Activated CD4-positive, alpha-beta memory T cell treated with anti-CD3 and anti-CD28 coated beads, Interleukin-2, amount 10 ng/mL, durations not matched to agents 7 days and 5 days (primary cell): ENCODE measurements at regions of chr11 and their contacts with region 1.

Region 1: DNA sequence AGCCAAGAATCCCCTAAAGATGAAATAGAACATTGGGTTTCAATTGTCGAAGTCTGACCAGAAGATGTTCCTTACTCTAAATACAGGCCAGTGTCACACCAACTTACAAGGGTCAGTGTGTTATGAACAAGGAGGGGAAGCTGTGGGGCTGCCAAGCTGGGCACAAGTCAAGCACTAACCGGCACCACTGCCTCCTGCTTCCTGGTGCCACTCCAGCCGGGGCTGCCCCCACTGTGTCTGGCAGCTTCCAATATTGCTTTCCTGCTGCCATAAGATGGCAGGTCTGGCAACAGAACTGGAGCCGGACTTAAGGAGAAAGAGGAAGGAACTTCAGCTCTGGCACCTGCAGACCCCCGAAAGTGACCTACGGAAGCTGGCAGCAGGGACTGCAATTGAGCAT is 13.7 kb upstream of the VPS37C start:
- DNase-seq: no peak
- H3K4me3 Mint-ChIP-seq: no peak overlapping the region
- H3K27ac Mint-ChIP-seq: no peak overlapping the region
- H3K4me1 Mint-ChIP-seq: peaks cover 7% of the 10 kb centered on the region
- H3K27me3 Mint-ChIP-seq: peaks cover 14% of the 10 kb centered on the region

Region 2: GRCh38 chr11:61161190-61162091 is 13.5 kb before region 1 on chr11 and contains the start of gene VPS37C:
- CTCF ChIA-PET with region 1: no interaction called
- POLR2A ChIA-PET with region 1: no interaction called
- DNase-seq: peak; percentile 93
- H3K4me3 Mint-ChIP-seq: peak within 1 kb of the TSS; percentile 88
- H3K27ac Mint-ChIP-seq: peak within 1 kb of the TSS; percentile 92
- H3K4me1 Mint-ChIP-seq: peaks cover 48% of the 10 kb centered on the region
- H3K27me3 Mint-ChIP-seq: no peaks in the 10 kb centered on the region
- total RNA-seq, gene VPS37C: 6.1 to 7.5 TPM

Region 3: GRCh38 chr11:61187505-61188130 is 12.7 kb after region 1 on chr11:
- CTCF ChIA-PET with region 1: interaction called, 17 read pairs
- POLR2A ChIA-PET with region 1: no interaction called
- DNase-seq: peak; percentile 80
- H3K4me3 Mint-ChIP-seq: no peak overlapping the region
- H3K27ac Mint-ChIP-seq: no peak overlapping the region
- H3K4me1 Mint-ChIP-seq: peaks cover 4% of the 10 kb centered on the region
- H3K27me3 Mint-ChIP-seq: peaks cover 10% of the 10 kb centered on the region

Region 4: GRCh38 chr11:62208785-62209144 is 1033.8 kb after region 1 on chr11:
- CTCF ChIA-PET with region 1: no interaction called
- POLR2A ChIA-PET with region 1: no interaction called
- DNase-seq: no peak
- H3K4me3 Mint-ChIP-seq: no peak overlapping the region
- H3K27ac Mint-ChIP-seq: no peak overlapping the region
- H3K4me1 Mint-ChIP-seq: no peaks in the 10 kb centered on the region
- H3K27me3 Mint-ChIP-seq: peaks cover 15% of the 10 kb centered on the region